ENCODE measurements at regions of chr11 and their contacts with region 1.

Region 1: DNA sequence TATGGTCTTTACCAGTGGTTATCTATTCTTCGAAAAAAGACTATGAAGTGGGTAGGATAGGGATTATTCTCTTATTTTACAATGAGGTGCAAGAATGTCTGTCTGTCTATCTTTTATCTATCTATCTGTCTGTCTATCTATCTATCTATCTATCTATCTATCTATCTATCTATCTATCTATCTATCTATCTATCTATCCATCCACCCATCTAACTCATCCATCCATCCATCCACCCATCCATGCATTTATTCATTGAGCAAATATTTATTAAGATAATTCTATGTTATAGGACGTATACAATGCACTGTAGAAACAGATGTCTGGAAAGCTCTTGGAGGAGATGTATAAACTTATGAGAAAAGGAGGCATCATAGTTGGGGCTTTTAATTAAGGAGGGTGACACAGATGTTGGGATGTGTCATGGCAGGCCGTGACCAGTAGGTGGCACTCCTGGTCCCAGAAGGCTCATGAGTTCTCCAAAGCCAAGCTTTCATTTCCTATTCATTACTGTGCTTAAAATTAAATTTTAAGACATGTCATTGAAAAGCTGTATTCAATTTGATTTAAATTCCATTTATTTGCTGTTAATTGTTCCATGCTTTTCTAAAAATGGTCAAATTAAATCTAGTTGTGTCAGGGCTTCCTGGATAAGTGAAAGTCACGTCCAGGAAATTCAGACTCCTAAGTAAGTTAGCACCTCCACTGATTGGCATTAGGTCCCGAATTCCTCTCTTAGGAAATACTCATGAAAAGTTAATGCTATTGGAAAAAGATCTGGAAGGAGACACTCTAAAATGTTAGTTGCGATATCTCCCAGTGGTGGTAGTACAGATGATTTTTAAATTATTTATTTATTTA is 19.0 kb upstream of the E2F8 start:
- DNase-seq: peak; percentile 41
- H3K27ac ChIP-seq: no peak overlapping the region
- CTCF ChIP-seq: peak; percentile 93

Region 2: GRCh38 chr11:19071255-19071654 is 188.5 kb before region 1 on chr11:
- CTCF ChIA-PET with region 1: interaction called, 10 read pairs
- POLR2A ChIA-PET with region 1: no interaction called
- DNase-seq: peak; percentile 78
- H3K27ac ChIP-seq: no peak overlapping the region
- CTCF ChIP-seq: peak; percentile 97

Region 3: DNA sequence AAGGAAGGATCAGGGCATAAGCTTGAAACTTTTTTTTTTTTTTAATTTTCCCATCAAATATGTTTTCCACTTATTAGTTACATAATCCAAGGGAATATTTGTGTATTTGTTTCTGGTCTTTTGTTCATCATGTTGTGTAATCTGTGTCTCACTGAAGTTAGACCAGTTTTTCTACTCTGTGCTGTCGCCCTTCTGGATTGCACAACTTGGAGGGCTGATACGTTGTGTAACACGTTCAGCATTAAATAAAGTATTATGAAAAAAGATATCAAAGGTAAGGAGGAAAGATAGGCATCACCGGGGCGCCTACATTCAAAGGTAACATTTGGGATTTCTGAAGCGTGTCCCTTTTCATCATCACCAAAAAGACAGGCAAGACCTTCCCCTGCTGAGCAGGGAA is 15.6 kb before region 1 on chr11:
- CTCF ChIA-PET with region 1: interaction called, 10 read pairs
- POLR2A ChIA-PET with region 1: no interaction called
- DNase-seq: peak; percentile 67
- H3K27ac ChIP-seq: peak overlapping the region; percentile 76
- CTCF ChIP-seq: no peak

Measured in RWPE1 (cell line).